ENCODE measurements at regions of chrX and their contacts with region 1.

Region 1: DNA sequence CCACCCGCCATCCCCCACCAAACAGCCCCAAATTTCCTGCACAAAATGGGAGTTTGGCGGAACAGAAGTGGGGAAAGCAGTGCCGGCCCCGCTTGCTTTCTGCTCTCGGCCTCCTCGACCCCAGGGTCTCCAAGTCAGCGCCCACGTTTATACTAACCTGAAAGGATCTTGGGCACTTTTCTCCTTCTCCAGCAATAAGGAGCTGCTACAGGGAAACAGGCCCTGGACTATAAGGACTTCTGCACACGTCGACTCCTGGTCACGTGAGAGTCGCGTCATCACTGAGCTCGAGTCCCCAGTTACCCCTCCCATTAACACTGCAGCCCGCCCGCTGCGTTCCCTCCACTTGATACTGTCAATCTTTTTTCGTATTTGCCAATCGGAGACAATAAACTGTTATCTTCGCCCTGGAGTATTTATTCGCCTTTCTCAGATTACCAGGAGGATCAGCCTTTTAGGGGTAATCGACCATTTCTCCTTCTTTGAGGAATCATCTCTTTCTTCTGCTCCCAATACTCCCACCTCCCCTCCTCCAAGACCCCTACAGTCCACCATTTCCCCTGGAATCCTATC is at the start of gene TCEAL8:
- DNase-seq: peak; percentile 88

Region 2: GRCh38 chrX:103214870-103215424 is 40.1 kb before region 1 on chrX and contains the start of gene BEX4:
- CTCF ChIA-PET with region 1: interaction called, 3 read pairs
- POLR2A ChIA-PET with region 1: interaction called, 10 read pairs
- DNase-seq: peak; percentile 88

Region 3: GRCh38 chrX:103233263-103233662 is 21.7 kb before region 1 on chrX:
- CTCF ChIA-PET with region 1: no interaction called
- POLR2A ChIA-PET with region 1: interaction called, 14 read pairs
- DNase-seq: no peak

Region 4: GRCh38 chrX:103275947-103276538 is 21.0 kb after region 1 on chrX:
- CTCF ChIA-PET with region 1: no interaction called
- POLR2A ChIA-PET with region 1: interaction called, 16 read pairs
- DNase-seq: no peak

Region 5: DNA sequence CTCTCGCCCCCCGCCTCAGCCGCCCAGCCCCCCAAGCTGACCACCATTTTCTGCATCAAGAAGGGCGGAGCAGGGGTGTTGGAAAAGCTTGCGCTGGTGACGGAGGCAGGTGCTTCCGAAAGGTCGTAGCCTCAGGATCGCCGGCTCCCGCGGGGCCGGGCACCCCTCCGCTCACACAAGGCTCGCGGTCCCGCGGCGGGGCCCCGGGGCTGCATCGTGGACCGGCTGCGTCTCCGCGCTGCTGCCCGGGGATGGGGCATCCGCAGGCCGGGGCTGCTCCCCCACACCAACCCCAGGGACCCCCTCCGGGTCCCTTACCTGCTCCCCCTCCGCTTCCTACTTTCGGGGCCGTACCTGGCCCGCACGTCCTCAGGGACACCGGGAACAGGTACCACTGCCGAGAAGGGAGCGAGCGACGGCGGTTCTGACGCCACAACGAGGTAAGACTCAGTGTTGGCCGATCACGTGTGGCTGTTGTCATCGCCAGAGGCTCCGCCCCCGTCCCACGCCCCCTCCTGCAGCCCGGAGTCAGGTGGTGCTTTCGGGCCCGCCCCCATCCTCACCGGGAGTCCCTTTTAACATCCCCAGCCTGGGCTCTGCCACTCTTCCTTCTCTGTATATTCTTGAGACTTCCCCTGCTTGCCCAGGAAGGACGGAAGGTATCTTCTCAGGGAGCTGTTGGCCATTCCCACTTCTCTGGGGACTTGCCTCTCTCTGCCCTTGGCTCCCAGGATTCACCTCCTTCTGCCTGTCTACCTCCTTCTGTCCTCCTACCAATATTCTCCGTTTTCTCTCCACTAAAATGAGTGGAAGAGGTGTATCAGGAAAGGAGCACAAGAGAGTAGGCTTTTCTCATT is 55.8 kb after region 1 on chrX and contains the start of gene BEX2:
- CTCF ChIA-PET with region 1: no interaction called
- POLR2A ChIA-PET with region 1: interaction called, 12 read pairs
- DNase-seq: peak; percentile 90

Region 6: GRCh38 chrX:103369479-103369878 is 114.5 kb after region 1 on chrX:
- CTCF ChIA-PET with region 1: no interaction called
- POLR2A ChIA-PET with region 1: no interaction called
- DNase-seq: no peak

Region 7: GRCh38 chrX:103797691-103798090 is 542.7 kb after region 1 on chrX:
- CTCF ChIA-PET with region 1: no interaction called
- POLR2A ChIA-PET with region 1: no interaction called
- DNase-seq: no peak

Measured in HEK293T (cell line).